Activated naive CD4-positive, alpha-beta T cell treated with anti-CD3 and anti-CD28 coated beads, Interleukin-2, amount 10 ng/mL, durations not matched to agents 7 days and 5 days (primary cell): ENCODE measurements at regions of chr22 and their contacts with region 1.

Region 1: DNA sequence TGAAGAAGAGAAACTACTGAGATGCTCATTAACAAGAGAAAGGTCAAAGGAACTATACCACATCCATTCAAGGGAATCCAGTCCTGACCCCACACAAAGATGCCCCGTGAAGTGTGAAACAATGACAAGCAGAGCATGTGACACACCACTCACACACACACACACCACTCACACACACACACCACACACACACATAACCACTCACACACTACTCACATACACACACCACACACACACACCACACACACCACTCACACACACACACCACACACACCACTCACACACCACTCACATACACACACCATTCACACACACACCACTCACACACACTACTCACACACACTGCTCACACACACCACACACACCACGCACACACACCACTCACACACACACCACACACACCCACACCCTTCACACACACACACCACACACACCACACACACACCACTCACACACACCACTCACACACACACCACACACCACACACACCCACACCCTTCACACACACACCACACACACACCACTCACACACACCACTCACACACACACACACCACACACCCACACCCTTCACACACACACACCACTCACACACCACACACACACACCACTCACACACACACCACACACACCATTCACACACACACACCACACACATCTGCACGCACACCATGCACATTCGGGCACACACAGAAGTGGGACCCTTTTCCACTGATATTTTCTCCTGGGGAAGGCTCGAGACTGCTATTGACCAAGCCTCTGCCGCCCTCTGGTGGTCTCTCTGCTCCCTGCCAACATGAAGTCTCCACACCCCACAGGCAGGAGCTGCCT is 32.0 kb upstream of the COMT start:
- DNase-seq: peak; percentile 90
- H3K4me3 Mint-ChIP-seq: no peak overlapping the region
- H3K27ac Mint-ChIP-seq: no peak overlapping the region
- H3K4me1 Mint-ChIP-seq: peaks cover 2% of the 10 kb centered on the region
- H3K27me3 Mint-ChIP-seq: no peaks in the 10 kb centered on the region

Region 2: GRCh38 chr22:19756288-19757128 is 153.1 kb before region 1 on chr22:
- CTCF ChIA-PET with region 1: interaction called, 46 read pairs
- DNase-seq: peak; percentile 84
- H3K4me3 Mint-ChIP-seq: peak overlapping the region; percentile 60
- H3K27ac Mint-ChIP-seq: no peak overlapping the region
- H3K4me1 Mint-ChIP-seq: peaks cover 26% of the 10 kb centered on the region
- H3K27me3 Mint-ChIP-seq: peaks cover 97% of the 10 kb centered on the region

Region 3: DNA sequence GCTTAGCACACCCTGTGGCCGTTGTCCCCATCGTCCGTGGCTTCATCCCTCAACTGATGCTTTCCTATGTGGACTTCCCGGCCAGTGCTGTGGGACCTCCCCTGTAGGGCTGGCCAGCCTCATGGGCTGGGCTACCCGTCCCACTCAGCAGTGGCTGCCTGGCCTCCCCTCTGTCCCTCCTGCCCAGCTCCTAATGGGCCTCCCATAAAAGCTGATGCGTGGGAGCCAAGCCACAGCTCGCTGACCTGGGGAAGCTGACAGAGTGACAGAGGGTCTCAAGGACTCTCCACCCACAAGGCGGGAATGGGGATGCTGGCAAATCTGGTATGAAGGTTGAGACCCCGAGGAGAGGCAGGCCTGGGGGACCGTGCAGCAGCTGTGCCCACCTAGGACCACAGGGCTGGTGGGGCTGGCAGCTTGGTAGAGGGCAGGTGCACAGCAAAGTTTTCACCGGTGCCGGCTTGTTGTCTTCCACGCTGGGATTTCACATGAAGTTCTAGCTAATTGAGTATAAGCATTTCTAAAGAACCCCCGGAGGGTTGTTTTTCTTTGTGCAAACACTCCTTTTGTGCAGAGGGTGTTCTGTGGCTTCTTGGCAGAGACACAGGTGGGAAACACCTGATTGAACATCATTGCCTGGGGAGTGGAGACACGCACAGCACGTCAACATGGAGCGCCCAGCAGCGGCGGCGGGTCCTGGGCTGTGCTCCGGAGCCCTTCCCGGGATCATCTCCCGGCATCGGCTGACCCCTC is 125.8 kb before region 1 on chr22:
- CTCF ChIA-PET with region 1: no interaction called
- DNase-seq: peak; percentile 9
- H3K4me3 Mint-ChIP-seq: no peak overlapping the region
- H3K27ac Mint-ChIP-seq: no peak overlapping the region
- H3K4me1 Mint-ChIP-seq: no peaks in the 10 kb centered on the region
- H3K27me3 Mint-ChIP-seq: peaks cover 36% of the 10 kb centered on the region

Region 4: DNA sequence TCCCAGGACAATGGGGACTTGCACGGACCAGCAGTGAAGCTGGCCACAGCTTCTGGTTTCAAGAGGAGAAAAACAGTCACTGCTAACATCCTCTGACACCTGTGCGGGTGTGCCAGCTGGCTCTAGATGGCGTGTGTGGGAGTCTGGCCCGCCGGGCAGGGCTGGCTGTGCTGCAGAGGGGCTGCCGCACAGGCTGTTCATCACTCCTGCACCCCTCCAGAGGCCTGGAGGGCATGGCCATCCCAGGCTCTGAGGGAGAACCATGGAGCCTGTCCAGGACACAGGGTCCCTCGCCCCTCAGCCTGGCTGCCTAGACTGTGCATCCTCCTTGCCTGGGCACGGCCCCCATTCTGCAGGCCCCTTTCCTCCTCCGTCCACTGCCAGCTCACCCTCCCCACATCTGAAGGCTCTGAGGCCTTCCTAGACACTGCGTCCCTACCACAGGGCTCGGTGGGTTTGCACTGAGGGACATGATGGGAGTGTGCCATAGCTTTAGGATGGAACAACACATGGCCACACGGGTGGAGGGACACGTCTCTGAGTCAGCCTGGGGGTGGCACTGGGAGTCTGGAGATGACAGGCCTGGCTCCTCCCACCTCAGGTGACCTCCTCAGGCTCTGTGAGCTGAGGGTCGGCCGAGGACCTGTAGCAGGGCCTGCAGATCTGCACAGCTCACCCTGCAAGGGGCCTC is 12.8 kb before region 1 on chr22:
- CTCF ChIA-PET with region 1: interaction called, 16 read pairs
- DNase-seq: peak; percentile 34
- H3K4me3 Mint-ChIP-seq: no peak overlapping the region
- H3K27ac Mint-ChIP-seq: peak overlapping the region; percentile 37
- H3K4me1 Mint-ChIP-seq: peaks cover 47% of the 10 kb centered on the region
- H3K27me3 Mint-ChIP-seq: no peaks in the 10 kb centered on the region